ENCODE measurements at regions of chr16 and their contacts with region 1.

Region 1: DNA sequence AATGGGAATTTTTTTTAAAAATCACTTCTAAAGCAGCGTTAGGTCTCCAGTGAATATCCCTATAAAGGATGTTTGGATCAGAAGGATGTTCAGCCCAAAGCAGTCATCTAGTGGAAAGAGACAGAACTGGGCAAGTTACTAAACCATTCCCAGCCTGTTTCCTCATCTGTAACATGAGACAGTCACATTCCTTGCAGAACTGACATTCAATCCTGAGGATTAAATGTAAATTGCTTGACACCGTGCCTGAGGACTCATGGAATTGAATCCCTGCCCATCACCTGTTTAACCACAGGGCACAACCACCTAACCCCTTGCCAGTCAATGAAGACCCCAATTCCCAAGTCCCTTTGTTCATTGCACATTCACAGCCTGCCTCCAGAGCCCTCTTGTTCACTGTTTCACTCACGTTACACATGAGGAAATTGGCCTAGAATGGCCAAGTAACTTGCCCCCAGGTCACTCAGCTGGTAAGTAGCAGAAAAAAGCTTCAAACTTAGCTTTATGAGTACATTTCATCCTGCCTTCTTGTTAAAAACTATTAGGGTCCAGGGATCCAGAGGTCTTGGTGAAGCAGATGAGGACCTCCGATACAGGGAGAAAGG is 1.4 kb downstream of the CMTM2 start:
- DNase-seq: no peak
- ATAC-seq: no peak
- H3K4me3 Mint-ChIP-seq: no peak overlapping the region
- H3K27ac Mint-ChIP-seq: no peak overlapping the region
- H3K4me1 Mint-ChIP-seq: peaks cover 23% of the 10 kb centered on the region
- H3K27me3 Mint-ChIP-seq: peaks cover 34% of the 10 kb centered on the region
- CTCF ChIP-seq: no peak

Region 2: GRCh38 chr16:66552286-66553177 is 28.2 kb before region 1 on chr16 and contains the start of gene CKLF:
- CTCF ChIA-PET with region 1: interaction called, 11 read pairs
- POLR2A ChIA-PET with region 1: interaction called, 5 read pairs
- intact Hi-C with region 1: no loop called
- DNase-seq: peak; percentile 90
- ATAC-seq: peak; percentile 76
- H3K4me3 Mint-ChIP-seq: peak within 1 kb of the TSS; percentile 88
- H3K27ac Mint-ChIP-seq: peak within 1 kb of the TSS; percentile 92
- H3K4me1 Mint-ChIP-seq: peaks cover 63% of the 10 kb centered on the region
- H3K27me3 Mint-ChIP-seq: no peaks in the 10 kb centered on the region
- CTCF ChIP-seq: no peak
- total RNA-seq, gene CKLF: 99.0 to 99.7 TPM

Region 3: GRCh38 chr16:66562407-66562806 is 18.3 kb before region 1 on chr16:
- CTCF ChIA-PET with region 1: interaction called, 29 read pairs
- POLR2A ChIA-PET with region 1: interaction called, 10 read pairs
- intact Hi-C with region 1: no loop called
- DNase-seq: no peak
- ATAC-seq: no peak
- H3K4me3 Mint-ChIP-seq: no peak overlapping the region
- H3K27ac Mint-ChIP-seq: peak overlapping the region; percentile 64
- H3K4me1 Mint-ChIP-seq: peaks cover 56% of the 10 kb centered on the region
- H3K27me3 Mint-ChIP-seq: no peaks in the 10 kb centered on the region
- CTCF ChIP-seq: peak; percentile 44

Region 4: DNA sequence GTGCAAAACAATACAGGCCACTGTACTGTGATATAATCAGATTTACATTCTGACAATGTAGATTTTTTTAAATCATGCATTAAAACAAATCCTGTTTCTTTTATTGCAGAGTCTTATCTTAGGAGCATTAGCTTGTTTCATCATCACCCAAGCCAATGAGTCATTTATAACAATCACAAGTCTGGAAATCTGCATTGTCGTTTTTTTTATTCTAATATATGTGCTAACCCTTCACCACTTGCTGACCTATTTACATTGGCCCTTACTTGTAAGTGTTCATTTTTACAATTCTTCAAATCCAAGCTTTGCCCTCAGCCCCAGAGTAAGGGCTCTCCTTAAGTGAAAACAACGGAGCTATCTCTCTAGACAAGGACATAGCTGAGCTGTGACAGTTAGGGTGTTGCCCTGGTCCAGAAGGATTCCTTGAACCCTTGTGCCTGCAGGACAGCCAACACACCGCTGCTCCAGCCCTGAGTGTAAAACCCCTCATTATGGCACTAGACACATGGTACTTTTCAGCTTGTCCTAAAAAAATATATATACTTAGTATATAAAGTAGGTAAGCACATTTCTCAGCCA is 10.8 kb before region 1 on chr16:
- CTCF ChIA-PET with region 1: interaction called, 19 read pairs
- POLR2A ChIA-PET with region 1: interaction called, 19 read pairs
- intact Hi-C with region 1: no loop called
- DNase-seq: no peak
- ATAC-seq: no peak
- H3K4me3 Mint-ChIP-seq: no peak overlapping the region
- H3K27ac Mint-ChIP-seq: no peak overlapping the region
- H3K4me1 Mint-ChIP-seq: peaks cover 16% of the 10 kb centered on the region
- H3K27me3 Mint-ChIP-seq: no peaks in the 10 kb centered on the region
- CTCF ChIP-seq: no peak

Measured in activated CD8-positive, alpha-beta T cell treated with anti-CD3 and anti-CD28 coated beads for 36 hours (primary cell).